Heart left ventricle (tissue), 16 donors: ENCODE measurements at regions of chr10 and their contacts with region 1.

Region 1: GRCh38 chr10:124092860-124093773 is at the start of gene CHST15:
- DNase-seq: peak; percentile 38 to 75 (median 50)
- ATAC-seq: peak in 3 of 4 donors; percentile 23 to 54 (median 46)
- H3K4me3 ChIP-seq: peak within 1 kb of the TSS; percentile 29 to 83 (median 64)
- H3K27ac ChIP-seq: peak within 1 kb of the TSS; percentile 59 to 95 (median 79)
- H3K4me1 ChIP-seq: peaks cover 0 to 41% (median 22%) of the 10 kb centered on the region in 12 donors
- H3K27me3 ChIP-seq: peaks cover 0 to 53% (median 8%) of the 10 kb centered on the region in 9 donors
- CTCF ChIP-seq: peak in 5 of 12 donors; percentile 6 to 29 (median 23)
- POLR2A ChIP-seq: peak in 1 of 2 donors; percentile 17
- total RNA-seq, gene CHST15: 3.4 to 27.1 (median 4.2) TPM

Region 2: GRCh38 chr10:124025660-124026588 is 67.2 kb before region 1 on chr10:
- intact Hi-C with region 1: loop called in 1 of 10 experiments (anchors 5 kb)
- DNase-seq: peak in 2 of 5 donors; percentile 17 to 54
- ATAC-seq: peak in 2 of 4 donors; percentile 64 to 73
- H3K4me3 ChIP-seq: no peak overlapping the region
- H3K27ac ChIP-seq: no peak overlapping the region
- H3K4me1 ChIP-seq: peaks cover 0 to 4% (median 0%) of the 10 kb centered on the region in 12 donors
- H3K27me3 ChIP-seq: peaks cover 0 to 12% (median 0%) of the 10 kb centered on the region in 9 donors
- CTCF ChIP-seq: peak; percentile 30 to 57 (median 39)
- POLR2A ChIP-seq: no peak

Region 3: DNA sequence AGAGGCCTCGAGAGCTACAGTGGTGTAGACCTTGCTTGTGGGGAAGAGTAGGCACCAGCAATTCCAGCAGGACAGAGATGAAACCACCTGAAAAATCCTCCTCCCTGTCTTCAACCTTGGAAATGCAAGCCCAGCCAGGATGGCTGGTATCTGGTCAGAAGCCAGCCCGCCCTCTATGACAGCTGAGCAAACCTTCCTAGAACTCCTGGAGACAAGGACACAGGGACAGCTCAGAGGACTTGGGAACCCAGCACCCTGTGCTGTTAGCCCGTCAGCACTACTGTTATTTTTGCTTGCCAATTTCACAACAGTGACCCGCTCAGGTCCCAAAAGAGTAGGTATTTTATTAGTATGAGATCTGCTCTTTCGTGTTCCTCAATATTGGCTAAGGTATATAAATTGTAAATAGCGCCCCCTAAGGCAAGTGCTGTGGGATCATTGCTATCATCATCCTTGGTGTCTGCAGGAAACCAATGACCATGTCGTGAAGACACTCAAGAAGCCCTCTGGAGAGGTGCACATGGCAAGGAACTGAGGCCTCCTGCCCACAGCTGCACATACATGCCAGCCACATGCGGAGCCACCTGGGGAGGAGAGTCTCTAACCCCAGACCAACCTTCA is 156.8 kb after region 1 on chr10:
- intact Hi-C with region 1: loop called in 1 of 10 experiments (anchors 5 kb)
- DNase-seq: peak in 1 of 5 donors; percentile 4
- ATAC-seq: no peak
- H3K4me3 ChIP-seq: no peak overlapping the region
- H3K27ac ChIP-seq: no peak overlapping the region
- H3K4me1 ChIP-seq: peaks cover 0 to 32% (median 9%) of the 10 kb centered on the region in 12 donors
- H3K27me3 ChIP-seq: peaks cover 0 to 3% (median 0%) of the 10 kb centered on the region in 9 donors
- CTCF ChIP-seq: peak in 2 of 12 donors; percentile 14 to 16
- POLR2A ChIP-seq: no peak